ENCODE measurements at regions of chr7 and their contacts with region 1.

Region 1: GRCh38 chr7:124349443-124349842 is 316.6 kb upstream of the TMEM229A start:
- DNase-seq: no peak
- H3K4me3 ChIP-seq: no peak overlapping the region
- H3K27ac ChIP-seq: no peak overlapping the region
- H3K4me1 ChIP-seq: no peaks in the 10 kb centered on the region
- H3K27me3 ChIP-seq: no peaks in the 10 kb centered on the region
- CTCF ChIP-seq: no peak
- EP300 ChIP-seq: no peak
- POLR2A ChIP-seq: no peak

Region 2: DNA sequence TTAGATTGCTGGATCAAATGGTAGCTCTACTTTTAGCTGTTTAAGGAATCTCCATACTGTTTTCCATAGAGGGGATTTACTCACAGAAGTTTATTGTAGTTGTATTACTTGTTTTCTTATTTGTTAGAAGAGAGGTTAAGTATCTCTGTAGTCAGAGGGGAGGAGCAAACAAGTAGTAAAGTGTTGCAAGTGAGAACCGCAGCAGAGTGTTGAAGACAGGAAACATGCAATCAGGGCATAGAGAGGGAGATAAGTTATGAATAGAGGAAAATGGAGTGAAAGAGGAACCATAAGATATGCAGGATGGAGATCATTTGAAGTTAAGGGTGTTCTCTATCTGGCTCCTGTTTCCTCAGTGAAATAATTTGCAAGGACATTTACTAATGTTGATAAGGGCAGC is 14.8 kb after region 1 on chr7:
- in situ Hi-C with region 1: no loop called
- intact Hi-C with region 1: loop called (anchors 1 kb)
- DNase-seq: no peak
- H3K4me3 ChIP-seq: no peak overlapping the region
- H3K27ac ChIP-seq: no peak overlapping the region
- H3K4me1 ChIP-seq: no peaks in the 10 kb centered on the region
- H3K27me3 ChIP-seq: no peaks in the 10 kb centered on the region
- CTCF ChIP-seq: no peak
- EP300 ChIP-seq: no peak
- POLR2A ChIP-seq: no peak